ENCODE measurements at regions of chr17 and their contacts with region 1.

Region 1: GRCh38 chr17:58679263-58680037 is 12.4 kb downstream of the TEX14 start:
- DNase-seq: peak; percentile 100
- ATAC-seq: peak; percentile 90
- H3K4me3 ChIP-seq: no peak overlapping the region
- H3K27ac ChIP-seq: no peak overlapping the region
- H3K4me1 ChIP-seq: peaks cover 0 to 20% of the 10 kb centered on the region in 2 experiments; a peak in 2 of 4 replicates
- H3K27me3 ChIP-seq: no peaks in the 10 kb centered on the region
- CTCF ChIP-seq: peak in 2 of 3 experiments; percentile 4 to 34; a peak in 2 of 6 replicates
- POLR2A ChIP-seq: peak; percentile 100
- RAD21 ChIP-seq: 0 out of 2 replicates have a peak, but pooled peaks have one; percentile 38

Region 2: DNA sequence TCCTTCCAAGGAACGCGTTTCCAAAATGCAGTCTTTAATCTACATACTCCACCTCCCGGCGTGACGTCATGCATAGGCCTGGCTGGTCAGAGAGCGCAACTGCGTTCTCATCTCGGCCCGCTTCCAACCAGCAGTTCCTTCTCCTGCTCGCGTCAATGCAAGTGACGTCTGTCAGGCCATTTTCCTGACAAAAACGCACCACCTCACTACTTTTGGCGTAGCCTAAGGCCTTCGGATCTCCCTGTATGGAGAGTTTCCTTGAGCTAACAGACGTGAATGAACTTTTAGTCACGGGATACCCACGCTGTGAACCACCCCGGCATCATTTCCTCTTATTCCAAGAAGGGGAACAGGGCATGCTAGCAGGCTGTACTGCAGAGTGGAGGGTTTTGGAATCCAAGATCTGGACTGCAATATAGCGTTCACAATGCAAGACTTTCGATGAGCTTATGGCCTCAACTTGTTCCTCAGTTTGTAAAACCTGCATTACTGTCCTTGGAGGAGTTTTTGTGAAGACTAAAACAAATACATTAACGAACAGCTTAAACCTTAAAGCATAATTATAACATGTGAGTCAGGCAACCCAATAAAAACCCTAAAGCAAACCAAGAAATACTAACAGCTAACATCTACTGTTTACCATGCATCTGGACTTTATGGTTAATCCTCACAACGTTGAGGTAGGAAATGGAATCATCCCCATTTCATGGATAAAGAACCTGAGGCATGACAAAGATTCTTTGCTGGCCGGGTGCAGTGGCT is 12.4 kb before region 1 on chr17:
- CTCF ChIA-PET with region 1: interaction called, 4 read pairs
- POLR2A ChIA-PET with region 1: interaction called, 59 read pairs
- RAD21 ChIA-PET with region 1: no interaction called
- intact Hi-C with region 1: loop called (anchors 1 kb)
- DNase-seq: peak; percentile 81
- ATAC-seq: peak; percentile 49
- H3K4me3 ChIP-seq: peak overlapping the region; percentile 26 to 46; a peak in 2 of 4 replicates
- H3K27ac ChIP-seq: no peak overlapping the region
- H3K4me1 ChIP-seq: peaks cover 25 to 50% of the 10 kb centered on the region in 2 experiments; a peak in 3 of 4 replicates
- H3K27me3 ChIP-seq: no peaks in the 10 kb centered on the region
- CTCF ChIP-seq: no peak
- POLR2A ChIP-seq: no peak
- RAD21 ChIP-seq: no peak

Region 3: DNA sequence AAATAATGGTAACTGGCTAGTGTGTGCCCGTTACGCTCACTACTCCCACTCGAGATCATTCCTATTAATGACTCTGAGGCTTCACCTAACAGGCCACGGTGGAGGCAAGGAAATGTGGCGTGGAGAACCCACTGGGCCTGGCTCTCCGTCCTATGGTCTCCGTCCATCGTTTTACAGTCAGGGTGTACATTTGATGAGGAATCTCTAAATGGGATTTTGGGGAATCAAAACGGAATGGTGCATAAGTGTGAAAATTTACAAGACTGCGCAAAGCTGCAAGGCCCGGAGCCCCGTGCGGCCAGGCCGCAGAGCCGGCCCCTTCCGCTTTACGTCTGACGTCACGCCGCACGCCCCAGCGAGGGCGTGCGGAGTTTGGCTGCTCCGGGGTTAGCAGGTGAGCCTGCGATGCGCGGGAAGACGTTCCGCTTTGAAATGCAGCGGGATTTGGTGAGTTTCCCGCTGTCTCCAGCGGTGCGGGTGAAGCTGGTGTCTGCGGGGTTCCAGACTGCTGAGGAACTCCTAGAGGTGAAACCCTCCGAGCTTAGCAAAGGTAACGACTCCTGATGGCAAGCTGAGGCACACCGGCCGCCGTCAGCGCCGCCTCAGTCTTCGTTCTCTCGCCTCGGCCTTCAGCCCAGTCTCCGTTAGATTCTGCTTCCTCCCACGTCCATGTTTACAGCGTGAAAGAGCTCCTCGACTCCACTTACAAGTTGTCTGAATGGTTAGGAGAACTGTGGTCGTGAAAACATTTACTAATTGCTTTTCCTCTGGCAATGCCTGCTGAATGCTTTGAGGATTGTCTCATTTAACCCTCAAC is 13.0 kb after region 1 on chr17 and contains the start of gene RAD51C:
- CTCF ChIA-PET with region 1: no interaction called
- POLR2A ChIA-PET with region 1: interaction called, 19 read pairs
- RAD21 ChIA-PET with region 1: no interaction called
- intact Hi-C with region 1: no loop called
- DNase-seq: peak; percentile 93
- ATAC-seq: peak; percentile 98
- H3K4me3 ChIP-seq: peak within 1 kb of the TSS; percentile 59 to 77
- H3K27ac ChIP-seq: peak within 1 kb of the TSS; percentile 69
- H3K4me1 ChIP-seq: peaks cover 13 to 18% of the 10 kb centered on the region in 2 experiments; a peak in 3 of 4 replicates
- H3K27me3 ChIP-seq: no peaks in the 10 kb centered on the region
- CTCF ChIP-seq: no peak
- POLR2A ChIP-seq: peak; percentile 97
- RAD21 ChIP-seq: peak; percentile 27
- total RNA-seq, gene RAD51C: 94.9 TPM